Posterior vena cava (tissue), 2 donors: ENCODE measurements at regions of chr13 and their contacts with region 1.

Region 1: DNA sequence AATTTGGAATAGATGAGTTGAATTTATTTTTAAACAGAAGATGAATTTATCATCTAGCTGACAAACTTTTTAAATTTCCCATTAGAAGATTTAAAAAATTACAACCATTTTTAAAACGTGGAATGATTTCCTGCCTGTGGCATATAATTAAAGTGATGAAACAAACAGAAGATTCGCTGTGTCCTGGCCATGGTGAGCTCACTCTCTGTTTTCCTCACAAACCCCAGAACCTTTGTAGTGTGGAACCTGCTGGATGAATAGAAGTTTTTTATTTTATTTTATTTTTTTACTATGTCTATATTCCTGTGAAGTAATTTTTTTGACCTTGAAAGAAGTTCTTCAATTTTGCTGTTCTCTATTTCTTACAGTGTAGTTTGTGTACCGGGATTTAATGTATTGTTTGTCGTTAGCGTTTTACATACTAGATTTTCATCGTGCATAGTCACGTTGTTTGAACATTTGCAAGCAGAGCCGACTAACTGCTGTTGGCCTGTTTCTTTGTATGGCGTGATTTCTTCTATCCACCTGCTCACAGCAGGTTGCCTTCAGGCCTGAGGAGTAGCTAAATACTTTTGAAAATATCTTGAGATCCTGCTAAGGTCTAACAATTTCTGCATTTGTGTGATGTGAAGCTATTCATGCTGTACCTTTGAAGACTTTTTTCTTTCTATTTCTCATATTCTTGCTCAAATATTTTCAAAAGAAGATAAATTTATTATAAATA is 149.2 kb downstream of the GGACT start:
- DNase-seq: no peak

Region 2: GRCh38 chr13:98879957-98880356 is 1559.5 kb before region 1 on chr13:
- intact Hi-C with region 1: loop called in 1 of 2 experiments (anchors 5 kb)
- DNase-seq: no peak

Region 3: DNA sequence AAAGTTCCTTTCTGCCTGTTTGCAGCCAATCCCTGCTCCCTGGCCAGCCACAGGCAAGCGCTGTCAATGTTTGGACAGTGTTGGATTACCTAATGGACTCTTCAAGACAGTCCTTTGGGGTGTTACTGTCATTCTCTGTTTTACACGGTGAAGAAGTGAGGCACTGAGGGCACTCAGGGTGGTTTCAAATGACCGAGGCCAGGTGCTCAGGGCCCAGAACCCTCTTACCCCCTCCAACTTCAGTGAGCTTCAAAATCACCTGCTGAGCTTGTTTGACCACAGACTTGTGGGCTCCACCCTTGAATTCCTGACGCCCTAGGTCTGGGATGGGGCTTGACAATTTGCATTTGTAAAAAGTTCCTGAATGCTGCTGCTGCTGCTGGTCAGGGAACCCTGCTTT is 51.3 kb after region 1 on chr13:
- intact Hi-C with region 1: no loop called
- DNase-seq: no peak